Caco-2 (cell line): ENCODE measurements at regions of chr1 and their contacts with region 1.

Region 1: DNA sequence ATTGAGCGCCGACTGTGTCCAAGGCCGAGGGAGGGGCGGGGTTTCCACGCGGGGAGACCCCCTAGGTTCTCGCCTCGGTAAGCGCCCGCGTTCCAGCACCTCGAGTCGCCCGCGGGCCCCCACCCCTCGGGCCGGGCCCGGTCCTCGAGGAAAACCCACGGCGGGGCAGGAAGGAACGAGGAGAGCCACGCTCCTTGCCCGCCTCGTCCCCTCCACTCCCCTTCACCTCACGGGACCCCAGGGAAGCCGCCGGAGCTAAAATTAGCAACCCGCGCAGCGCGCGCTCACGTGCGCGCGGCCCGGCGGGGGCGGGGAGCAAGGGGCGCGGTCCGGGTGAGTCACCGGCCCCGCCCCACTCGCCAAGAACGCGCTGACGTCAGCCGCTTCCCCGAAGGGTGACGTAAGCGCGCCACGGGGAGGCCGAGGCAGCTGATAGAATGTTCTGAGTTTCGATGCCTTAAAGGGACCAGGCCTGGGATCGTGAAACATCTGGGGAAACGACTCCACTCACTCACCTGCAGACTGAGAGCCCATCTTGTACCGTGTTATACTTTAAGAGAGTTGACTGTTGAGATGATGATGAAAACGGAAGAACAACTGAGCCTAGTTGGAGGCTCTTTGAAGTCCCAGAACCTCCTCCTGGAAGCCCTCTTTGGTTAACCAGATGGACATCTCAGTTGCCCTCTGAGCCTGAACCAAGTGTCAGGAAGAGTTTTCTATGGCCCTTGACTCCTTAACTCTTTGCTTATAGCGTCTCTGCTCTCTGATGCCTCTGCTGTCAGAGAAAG is 49.7 kb upstream of the ATF3 start:
- DNase-seq: peak; percentile 90 to 94
- H3K4me3 ChIP-seq: peak overlapping the region; percentile 93
- H3K4me3 Mint-ChIP-seq: peak overlapping the region; percentile 78
- H3K27ac Mint-ChIP-seq: peak overlapping the region; percentile 95
- H3K4me1 ChIP-seq: peaks cover 12% of the 10 kb centered on the region; the same call in 1 of the 2 replicates
- H3K4me1 Mint-ChIP-seq: peaks cover 7% of the 10 kb centered on the region
- H3K27me3 ChIP-seq: no peaks in the 10 kb centered on the region
- H3K27me3 Mint-ChIP-seq: no peaks in the 10 kb centered on the region
- CTCF ChIP-seq: peak in 1 of 2 experiments; percentile 7

Region 2: GRCh38 chr1:212353181-212353580 is 205.7 kb before region 1 on chr1:
- CTCF ChIA-PET with region 1: no interaction called
- POLR2A ChIA-PET with region 1: no interaction called
- intact Hi-C with region 1: no loop called
- DNase-seq: no peak
- H3K4me3 ChIP-seq: no peak overlapping the region
- H3K4me3 Mint-ChIP-seq: no peak overlapping the region
- H3K27ac Mint-ChIP-seq: no peak overlapping the region
- H3K4me1 ChIP-seq: no peaks in the 10 kb centered on the region
- H3K4me1 Mint-ChIP-seq: no peaks in the 10 kb centered on the region
- H3K27me3 ChIP-seq: no peaks in the 10 kb centered on the region
- H3K27me3 Mint-ChIP-seq: no peaks in the 10 kb centered on the region
- CTCF ChIP-seq: no peak

Region 3: DNA sequence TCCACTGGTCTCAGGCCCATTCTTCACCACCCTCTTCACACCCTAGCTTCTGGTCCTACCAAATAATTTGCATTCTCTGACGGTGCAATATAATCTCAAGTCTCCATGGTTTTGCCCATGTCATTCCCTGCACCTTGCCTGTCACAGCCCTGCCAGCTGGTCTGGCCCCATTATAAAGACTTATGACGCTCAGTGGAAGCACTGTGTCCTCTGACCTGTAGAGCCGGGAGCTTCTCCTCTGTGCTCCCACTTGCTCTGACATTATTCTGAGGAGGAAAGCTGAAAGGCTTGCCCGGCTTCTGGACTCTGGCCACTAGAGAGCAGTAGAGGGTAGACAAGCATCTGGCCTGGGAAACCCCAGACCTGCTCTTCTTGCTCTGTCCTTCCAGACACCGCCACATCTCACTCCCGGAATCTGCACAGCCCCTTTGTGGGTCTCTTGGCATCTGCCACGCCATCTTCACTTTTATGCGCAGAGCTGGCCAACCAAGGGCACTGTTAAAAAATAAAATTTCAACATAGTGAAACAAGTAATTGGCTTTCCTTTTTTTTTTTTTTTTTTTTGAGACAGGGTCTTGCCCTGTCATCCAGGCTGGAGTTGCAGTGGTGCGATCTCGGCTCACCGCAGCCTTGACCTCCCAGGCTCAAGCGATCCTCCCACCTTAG is 81.7 kb before region 1 on chr1:
- CTCF ChIA-PET with region 1: interaction called, 12 read pairs
- POLR2A ChIA-PET with region 1: interaction called, 17 read pairs
- intact Hi-C with region 1: loop called (anchors 1 kb)
- DNase-seq: peak; percentile 88 to 91
- H3K4me3 ChIP-seq: no peak overlapping the region
- H3K4me3 Mint-ChIP-seq: no peak overlapping the region
- H3K27ac Mint-ChIP-seq: no peak overlapping the region
- H3K4me1 ChIP-seq: peaks cover 5% of the 10 kb centered on the region
- H3K4me1 Mint-ChIP-seq: peaks cover 7% of the 10 kb centered on the region
- H3K27me3 ChIP-seq: no peaks in the 10 kb centered on the region
- H3K27me3 Mint-ChIP-seq: no peaks in the 10 kb centered on the region
- CTCF ChIP-seq: peak; percentile 94 to 95

Region 4: GRCh38 chr1:212482384-212483281 is 76.3 kb before region 1 on chr1:
- CTCF ChIA-PET with region 1: interaction called, 12 read pairs
- POLR2A ChIA-PET with region 1: interaction called, 4 read pairs
- intact Hi-C with region 1: loop called (anchors 1 kb)
- DNase-seq: peak in 1 of 2 experiments; percentile 44
- H3K4me3 ChIP-seq: no peak overlapping the region
- H3K4me3 Mint-ChIP-seq: no peak overlapping the region
- H3K27ac Mint-ChIP-seq: peak overlapping the region; percentile 29
- H3K4me1 ChIP-seq: peaks cover 41% of the 10 kb centered on the region
- H3K4me1 Mint-ChIP-seq: peaks cover 26% of the 10 kb centered on the region
- H3K27me3 ChIP-seq: no peaks in the 10 kb centered on the region
- H3K27me3 Mint-ChIP-seq: no peaks in the 10 kb centered on the region
- CTCF ChIP-seq: no peak

Region 5: GRCh38 chr1:212488397-212489283 is 70.2 kb before region 1 on chr1:
- CTCF ChIA-PET with region 1: interaction called, 7 read pairs
- POLR2A ChIA-PET with region 1: interaction called, 11 read pairs
- intact Hi-C with region 1: loop called (anchors 1 kb)
- DNase-seq: peak; percentile 80 to 87
- H3K4me3 ChIP-seq: no peak overlapping the region
- H3K4me3 Mint-ChIP-seq: no peak overlapping the region
- H3K27ac Mint-ChIP-seq: peak overlapping the region; percentile 90
- H3K4me1 ChIP-seq: peaks cover 34% of the 10 kb centered on the region
- H3K4me1 Mint-ChIP-seq: peaks cover 37% of the 10 kb centered on the region
- H3K27me3 ChIP-seq: no peaks in the 10 kb centered on the region
- H3K27me3 Mint-ChIP-seq: no peaks in the 10 kb centered on the region
- CTCF ChIP-seq: no peak

Region 6: GRCh38 chr1:212525479-212526110 is 33.3 kb before region 1 on chr1:
- CTCF ChIA-PET with region 1: no interaction called
- POLR2A ChIA-PET with region 1: no interaction called
- intact Hi-C with region 1: no loop called
- DNase-seq: no peak
- H3K4me3 ChIP-seq: no peak overlapping the region
- H3K4me3 Mint-ChIP-seq: no peak overlapping the region
- H3K27ac Mint-ChIP-seq: no peak overlapping the region
- H3K4me1 ChIP-seq: no peaks in the 10 kb centered on the region
- H3K4me1 Mint-ChIP-seq: no peaks in the 10 kb centered on the region
- H3K27me3 ChIP-seq: no peaks in the 10 kb centered on the region
- H3K27me3 Mint-ChIP-seq: peaks cover 10% of the 10 kb centered on the region
- CTCF ChIP-seq: no peak

Region 7: DNA sequence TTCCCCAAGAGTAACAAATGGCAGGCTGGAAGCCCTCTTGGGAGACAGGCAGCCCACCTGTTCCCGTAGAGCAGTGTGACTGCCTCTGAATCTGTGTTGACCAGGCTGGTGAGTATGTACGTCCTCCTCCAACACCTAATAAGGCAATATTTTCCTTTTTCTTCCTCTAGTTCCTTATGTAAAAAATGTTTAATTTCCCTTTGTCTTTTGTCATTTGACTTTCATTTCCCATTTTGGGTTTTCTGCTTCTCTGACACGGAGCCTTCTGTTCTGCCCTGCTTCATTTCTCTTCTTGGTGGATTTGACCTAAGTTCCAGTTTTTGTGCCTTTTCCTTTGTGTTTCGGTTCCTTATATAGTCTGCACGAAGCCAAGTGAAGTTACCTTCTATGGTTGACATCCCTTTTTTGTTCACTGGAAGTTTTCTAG is 16.1 kb before region 1 on chr1:
- CTCF ChIA-PET with region 1: no interaction called
- POLR2A ChIA-PET with region 1: no interaction called
- intact Hi-C with region 1: no loop called
- DNase-seq: no peak
- H3K4me3 ChIP-seq: no peak overlapping the region
- H3K4me3 Mint-ChIP-seq: no peak overlapping the region
- H3K27ac Mint-ChIP-seq: no peak overlapping the region
- H3K4me1 ChIP-seq: no peaks in the 10 kb centered on the region
- H3K4me1 Mint-ChIP-seq: no peaks in the 10 kb centered on the region
- H3K27me3 ChIP-seq: no peaks in the 10 kb centered on the region; the same call in 1 of the 2 replicates
- H3K27me3 Mint-ChIP-seq: peaks cover 8% of the 10 kb centered on the region
- CTCF ChIP-seq: no peak

Region 8: GRCh38 chr1:212847549-212847948 is 288.7 kb after region 1 on chr1 and contains the start of gene SPATA45:
- CTCF ChIA-PET with region 1: no interaction called
- POLR2A ChIA-PET with region 1: no interaction called
- intact Hi-C with region 1: no loop called
- DNase-seq: no peak
- H3K4me3 ChIP-seq: no peak within 1 kb of the TSS
- H3K4me3 Mint-ChIP-seq: no peak within 1 kb of the TSS
- H3K27ac Mint-ChIP-seq: no peak within 1 kb of the TSS
- H3K4me1 ChIP-seq: no peaks in the 10 kb centered on the region
- H3K4me1 Mint-ChIP-seq: no peaks in the 10 kb centered on the region
- H3K27me3 ChIP-seq: no peaks in the 10 kb centered on the region
- H3K27me3 Mint-ChIP-seq: no peaks in the 10 kb centered on the region
- CTCF ChIP-seq: no peak
- total RNA-seq, gene SPATA45: not detected in 2 replicates